ENCODE measurements at regions of chr5 and their contacts with region 1.

Region 1: GRCh38 chr5:107571621-107572536 is 98.9 kb downstream of the EFNA5 start:
- DNase-seq: peak; percentile 98
- H3K4me3 Mint-ChIP-seq: peak overlapping the region; percentile 65
- H3K27ac Mint-ChIP-seq: peak overlapping the region; percentile 79
- H3K4me1 Mint-ChIP-seq: peaks cover 63% of the 10 kb centered on the region
- H3K27me3 Mint-ChIP-seq: no peaks in the 10 kb centered on the region
- CTCF ChIP-seq: peak; percentile 79

Region 2: DNA sequence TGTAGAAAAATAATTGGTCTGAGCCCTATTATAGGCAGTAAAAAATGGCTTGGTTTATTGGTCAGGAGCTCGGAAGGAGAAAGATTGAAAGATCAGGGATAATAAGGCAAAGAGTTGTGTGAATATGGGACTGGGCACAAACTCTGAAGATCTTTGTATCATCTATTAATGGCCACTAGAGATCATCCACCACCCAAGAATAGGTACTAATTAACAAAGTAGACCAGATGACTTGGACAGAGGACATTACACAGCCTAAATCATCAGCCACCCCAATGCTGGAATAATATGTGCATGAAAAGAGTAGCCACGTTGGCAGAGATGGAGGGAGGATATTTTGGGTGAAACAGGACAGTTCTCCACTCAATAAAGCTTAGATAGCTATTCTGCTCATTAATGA is 265.3 kb before region 1 on chr5:
- CTCF ChIA-PET with region 1: no interaction called
- POLR2A ChIA-PET with region 1: interaction called, 3 read pairs
- intact Hi-C with region 1: loop called (anchors 5 kb)
- DNase-seq: peak; percentile 6
- H3K4me3 Mint-ChIP-seq: no peak overlapping the region
- H3K27ac Mint-ChIP-seq: no peak overlapping the region
- H3K4me1 Mint-ChIP-seq: no peaks in the 10 kb centered on the region
- H3K27me3 Mint-ChIP-seq: no peaks in the 10 kb centered on the region
- CTCF ChIP-seq: no peak

Region 3: DNA sequence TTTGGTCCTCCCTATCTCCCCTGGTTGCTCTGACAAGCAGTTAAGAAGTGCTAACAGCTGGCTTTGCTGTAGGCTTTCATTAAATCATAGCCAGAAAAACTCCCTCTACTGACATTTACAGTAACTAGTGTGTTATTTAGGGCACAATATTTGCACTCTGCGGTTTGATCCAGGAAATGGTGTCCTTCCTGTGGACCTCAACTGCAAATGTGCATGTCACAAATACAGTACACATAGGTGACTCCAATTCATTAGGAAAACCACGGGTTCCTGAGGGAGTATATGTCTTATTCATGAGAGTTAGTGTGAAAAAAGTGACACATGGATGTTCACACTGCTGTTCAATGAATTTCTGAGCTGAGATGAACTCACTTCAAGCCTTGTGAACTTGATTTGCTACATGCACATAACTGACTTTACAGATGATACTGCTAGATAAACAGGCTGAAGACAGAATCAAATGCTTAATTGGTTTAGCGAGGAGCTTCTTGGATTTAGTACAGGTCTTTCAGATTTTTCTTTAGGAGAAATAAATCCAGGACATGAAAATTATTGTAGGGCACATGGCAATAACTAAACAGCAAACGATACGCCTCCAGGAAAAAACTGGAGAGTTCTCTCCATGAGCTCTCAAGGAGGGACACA is 182.6 kb before region 1 on chr5:
- CTCF ChIA-PET with region 1: interaction called, 4 read pairs
- POLR2A ChIA-PET with region 1: interaction called, 29 read pairs
- intact Hi-C with region 1: loop called (anchors 2 kb)
- DNase-seq: peak; percentile 67
- H3K4me3 Mint-ChIP-seq: no peak overlapping the region
- H3K27ac Mint-ChIP-seq: peak overlapping the region; percentile 75
- H3K4me1 Mint-ChIP-seq: peaks cover 45% of the 10 kb centered on the region
- H3K27me3 Mint-ChIP-seq: no peaks in the 10 kb centered on the region
- CTCF ChIP-seq: no peak

Region 4: GRCh38 chr5:107469485-107470294 is 102.2 kb before region 1 on chr5:
- CTCF ChIA-PET with region 1: interaction called, 16 read pairs
- POLR2A ChIA-PET with region 1: interaction called, 44 read pairs
- intact Hi-C with region 1: loop called (anchors 1 kb)
- DNase-seq: peak; percentile 94
- H3K4me3 Mint-ChIP-seq: peak overlapping the region; percentile 47
- H3K27ac Mint-ChIP-seq: peak overlapping the region; percentile 93
- H3K4me1 Mint-ChIP-seq: peaks cover 77% of the 10 kb centered on the region
- H3K27me3 Mint-ChIP-seq: no peaks in the 10 kb centered on the region
- CTCF ChIP-seq: no peak

Region 5: GRCh38 chr5:107486489-107486888 is 85.4 kb before region 1 on chr5:
- CTCF ChIA-PET with region 1: interaction called, 6 read pairs
- POLR2A ChIA-PET with region 1: interaction called, 4 read pairs
- intact Hi-C with region 1: loop called (anchors 5 kb)
- DNase-seq: peak; percentile 94
- H3K4me3 Mint-ChIP-seq: no peak overlapping the region
- H3K27ac Mint-ChIP-seq: peak overlapping the region; percentile 72
- H3K4me1 Mint-ChIP-seq: peaks cover 40% of the 10 kb centered on the region
- H3K27me3 Mint-ChIP-seq: no peaks in the 10 kb centered on the region
- CTCF ChIP-seq: no peak

Region 6: DNA sequence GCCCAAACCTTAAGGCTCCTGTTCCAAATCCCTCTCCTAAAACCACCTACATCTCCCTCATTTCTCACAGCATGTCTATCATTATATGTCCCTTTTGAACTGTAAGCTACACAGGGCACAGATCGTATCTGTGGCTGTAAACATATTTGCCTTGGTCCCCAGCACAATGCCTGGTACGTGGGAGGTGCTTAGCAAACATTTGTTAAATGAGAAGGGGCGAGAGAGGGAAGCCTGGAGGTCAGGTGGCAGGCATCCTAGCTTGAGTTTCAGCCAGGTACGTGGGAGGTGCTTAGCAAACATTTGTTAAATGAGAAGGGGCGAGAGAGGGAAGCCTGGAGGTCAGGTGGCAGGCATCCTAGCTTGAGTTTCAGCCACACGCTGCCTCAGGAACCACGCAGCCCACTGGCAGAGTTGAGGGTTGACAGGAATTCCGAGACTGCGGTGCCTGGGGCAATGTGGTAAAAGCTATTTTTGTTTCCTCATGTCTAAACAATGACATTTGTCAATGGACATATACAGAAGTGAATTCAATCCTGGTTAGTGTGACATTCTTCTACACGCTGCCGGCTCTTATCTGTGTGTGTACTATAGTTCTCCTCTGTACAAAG is 14.7 kb before region 1 on chr5:
- CTCF ChIA-PET with region 1: interaction called, 13 read pairs
- POLR2A ChIA-PET with region 1: interaction called, 76 read pairs
- intact Hi-C with region 1: no loop called
- DNase-seq: peak; percentile 92
- H3K4me3 Mint-ChIP-seq: peak overlapping the region; percentile 20
- H3K27ac Mint-ChIP-seq: peak overlapping the region; percentile 77
- H3K4me1 Mint-ChIP-seq: peaks cover 50% of the 10 kb centered on the region
- H3K27me3 Mint-ChIP-seq: no peaks in the 10 kb centered on the region
- CTCF ChIP-seq: no peak

Region 7: GRCh38 chr5:107604832-107605389 is 33.0 kb after region 1 on chr5:
- CTCF ChIA-PET with region 1: interaction called, 5 read pairs
- POLR2A ChIA-PET with region 1: interaction called, 17 read pairs
- intact Hi-C with region 1: no loop called
- DNase-seq: no peak
- H3K4me3 Mint-ChIP-seq: no peak overlapping the region
- H3K27ac Mint-ChIP-seq: no peak overlapping the region
- H3K4me1 Mint-ChIP-seq: peaks cover 41% of the 10 kb centered on the region
- H3K27me3 Mint-ChIP-seq: no peaks in the 10 kb centered on the region
- CTCF ChIP-seq: no peak

Region 8: DNA sequence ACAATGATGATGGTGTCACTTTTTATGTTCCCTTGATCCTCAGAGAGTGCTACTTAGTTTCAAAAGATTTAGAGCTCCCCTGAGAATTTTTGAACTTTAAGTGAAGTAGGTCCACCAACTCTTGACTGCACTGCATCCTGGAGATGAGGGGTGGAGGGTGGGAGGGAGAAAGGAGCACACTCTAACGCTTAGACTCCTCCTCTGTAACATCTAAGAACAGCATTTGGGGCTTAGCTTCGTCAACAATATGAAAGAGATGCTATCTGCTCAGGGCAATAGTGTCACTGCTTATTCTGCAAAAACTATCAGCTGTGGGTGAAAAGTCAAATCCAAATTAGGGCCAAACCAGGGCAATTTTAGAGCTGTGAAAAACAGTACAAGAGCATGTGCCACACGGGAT is 341.6 kb after region 1 on chr5:
- CTCF ChIA-PET with region 1: no interaction called
- POLR2A ChIA-PET with region 1: no interaction called
- intact Hi-C with region 1: no loop called
- DNase-seq: no peak
- H3K4me3 Mint-ChIP-seq: no peak overlapping the region
- H3K27ac Mint-ChIP-seq: no peak overlapping the region
- H3K4me1 Mint-ChIP-seq: no peaks in the 10 kb centered on the region
- H3K27me3 Mint-ChIP-seq: no peaks in the 10 kb centered on the region
- CTCF ChIP-seq: no peak